Sigmoid colon (tissue), 7 donors: ENCODE measurements at regions of chr2 and their contacts with region 1.

Region 1: GRCh38 chr2:197804049-197804757 is at the start of gene PLCL1:
- DNase-seq: peak; percentile 97
- H3K4me3 ChIP-seq: peak within 1 kb of the TSS; percentile 51 to 95 (median 68)
- H3K27ac ChIP-seq: peak within 1 kb of the TSS; percentile 77 to 86 (median 84)
- H3K4me1 ChIP-seq: peaks cover 0 to 48% (median 30%) of the 10 kb centered on the region in 4 donors
- H3K27me3 ChIP-seq: no peaks in the 10 kb centered on the region
- CTCF ChIP-seq: no peak
- EP300 ChIP-seq: no peak
- POLR2A ChIP-seq: no peak
- total RNA-seq, gene PLCL1: 13.6 to 20.0 (median 16.9) TPM

Region 2: GRCh38 chr2:197705121-197705911 is 98.9 kb before region 1 on chr2 and contains the start of gene MARS2:
- intact Hi-C with region 1: loop called (anchors 2 kb)
- DNase-seq: peak; percentile 96
- H3K4me3 ChIP-seq: peak within 1 kb of the TSS; percentile 68 to 92 (median 76)
- H3K27ac ChIP-seq: peak within 1 kb of the TSS; percentile 77 to 87 (median 81)
- H3K4me1 ChIP-seq: peaks cover 0 to 40% (median 37%) of the 10 kb centered on the region in 4 donors
- H3K27me3 ChIP-seq: no peaks in the 10 kb centered on the region
- CTCF ChIP-seq: no peak
- EP300 ChIP-seq: no peak
- POLR2A ChIP-seq: peak; percentile 10 to 18
- total RNA-seq, gene MARS2: 3.1 to 6.6 (median 4.5) TPM

Region 3: DNA sequence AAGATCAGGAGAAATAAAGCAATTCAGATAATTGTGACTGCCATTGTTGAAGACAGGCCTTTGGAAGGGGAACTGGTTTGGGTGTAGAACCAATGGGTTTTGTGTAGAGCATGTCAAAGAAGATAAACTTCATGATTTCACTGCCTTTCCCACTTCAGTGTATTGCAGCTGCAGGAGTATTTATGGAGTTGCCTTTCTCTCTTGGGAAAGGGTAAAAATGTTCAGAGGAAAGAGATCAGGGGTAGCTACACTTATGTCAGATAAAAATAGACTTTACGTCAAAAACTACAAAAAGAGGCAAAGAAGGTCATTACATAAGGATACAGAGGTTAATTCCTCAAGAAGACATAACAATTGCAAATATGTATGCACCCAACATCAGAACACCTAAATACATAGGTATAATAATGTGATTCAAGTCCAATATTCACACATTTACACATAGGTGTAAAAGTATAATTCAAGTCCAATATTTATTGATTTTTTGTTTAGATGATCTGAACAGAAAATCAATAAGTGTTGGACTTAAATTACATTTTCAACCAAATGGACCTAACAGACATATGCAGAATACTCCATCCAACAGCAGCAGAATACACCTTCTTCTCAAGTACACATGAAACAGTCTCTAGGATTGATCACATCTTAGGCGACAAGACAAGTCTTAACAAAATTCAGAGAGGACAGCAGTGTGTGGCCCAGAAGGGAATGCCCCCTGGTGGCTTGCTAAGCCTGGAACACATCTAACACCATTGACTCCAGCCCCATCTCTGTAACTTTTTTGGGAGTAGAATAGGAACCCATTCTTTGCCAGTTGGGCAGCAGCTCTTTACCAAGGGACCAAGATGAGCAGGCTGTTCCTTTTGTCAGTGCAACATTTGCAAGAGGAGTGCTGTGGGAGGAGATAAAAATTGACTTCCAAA is 249.8 kb after region 1 on chr2:
- intact Hi-C with region 1: loop called (anchors 10 kb)
- DNase-seq: no peak
- H3K4me3 ChIP-seq: no peak overlapping the region
- H3K27ac ChIP-seq: no peak overlapping the region
- H3K4me1 ChIP-seq: no peaks in the 10 kb centered on the region
- H3K27me3 ChIP-seq: no peaks in the 10 kb centered on the region
- CTCF ChIP-seq: peak in 3 of 4 experiments; percentile 12 to 28 (median 26)
- EP300 ChIP-seq: no peak
- POLR2A ChIP-seq: no peak

Region 4: GRCh38 chr2:198127627-198128026 is 323.4 kb after region 1 on chr2:
- intact Hi-C with region 1: loop called (anchors 2 kb)
- DNase-seq: no peak
- H3K4me3 ChIP-seq: no peak overlapping the region
- H3K27ac ChIP-seq: no peak overlapping the region
- H3K4me1 ChIP-seq: peaks cover 0 to 9% (median 2%) of the 10 kb centered on the region in 4 donors
- H3K27me3 ChIP-seq: no peaks in the 10 kb centered on the region
- CTCF ChIP-seq: peak in 3 of 4 experiments; percentile 26 to 61 (median 55)
- EP300 ChIP-seq: no peak
- POLR2A ChIP-seq: no peak

Region 5: DNA sequence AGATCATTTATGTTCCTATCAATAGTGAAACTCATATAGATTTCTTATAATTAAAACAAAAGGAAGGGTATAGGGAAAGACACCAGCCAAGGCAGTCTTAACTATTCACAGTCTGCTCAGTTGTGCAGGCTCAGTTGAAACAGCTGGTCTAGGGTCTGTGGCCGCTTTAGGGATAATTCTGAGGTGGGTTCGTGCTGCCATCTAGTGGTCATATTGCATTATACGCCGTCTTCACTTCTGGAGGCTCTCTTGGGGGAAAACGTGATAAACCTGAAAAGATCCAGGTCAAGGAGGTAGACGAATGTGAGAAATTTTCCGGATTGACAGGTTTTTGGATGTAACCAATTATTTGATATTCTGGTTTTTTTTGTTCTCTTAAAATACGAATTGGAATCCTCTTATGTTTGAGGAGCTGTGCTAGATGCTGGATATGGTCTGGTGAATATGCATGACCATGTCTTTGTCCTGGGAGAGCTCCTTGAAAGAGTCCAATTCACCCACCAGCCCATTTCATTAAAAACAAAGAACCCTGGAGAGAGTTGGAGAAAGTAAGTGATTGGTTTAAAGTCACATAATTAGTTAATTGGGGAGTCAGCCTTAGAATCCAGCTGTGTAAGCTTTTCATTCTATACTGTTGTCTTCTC is 492.6 kb after region 1 on chr2:
- intact Hi-C with region 1: loop called (anchors 1 kb)
- DNase-seq: no peak
- H3K4me3 ChIP-seq: no peak overlapping the region
- H3K27ac ChIP-seq: no peak overlapping the region
- H3K4me1 ChIP-seq: peaks cover 0 to 4% (median 0%) of the 10 kb centered on the region in 4 donors
- H3K27me3 ChIP-seq: no peaks in the 10 kb centered on the region
- CTCF ChIP-seq: peak; percentile 48 to 82 (median 74)
- EP300 ChIP-seq: no peak
- POLR2A ChIP-seq: no peak

Region 6: GRCh38 chr2:199459286-199460016 is 1655.2 kb after region 1 on chr2:
- intact Hi-C with region 1: loop called (anchors 10 kb)
- DNase-seq: peak; percentile 96
- H3K4me3 ChIP-seq: peak overlapping the region; percentile 69 to 88 (median 78)
- H3K27ac ChIP-seq: peak overlapping the region; percentile 75 to 84 (median 76)
- H3K4me1 ChIP-seq: peaks cover 0 to 64% (median 59%) of the 10 kb centered on the region in 4 donors
- H3K27me3 ChIP-seq: peaks cover 64 to 86% (median 73%) of the 10 kb centered on the region in 3 donors
- CTCF ChIP-seq: no peak
- EP300 ChIP-seq: no peak
- POLR2A ChIP-seq: no peak